Naive thymus-derived CD4-positive, alpha-beta T cell (primary cell): ENCODE measurements at regions of chr17 and their contacts with region 1.

Region 1: GRCh38 chr17:46159686-46160085 is 33.5 kb downstream of the KANSL1 start:
- DNase-seq: no peak
- ATAC-seq: no peak
- H3K4me3 ChIP-seq: no peak overlapping the region
- H3K4me3 Mint-ChIP-seq: peak overlapping the region in 6 of 10 donors; percentile 2 to 55 (median 30)
- H3K27ac ChIP-seq: no peak overlapping the region
- H3K27ac Mint-ChIP-seq: peak overlapping the region in 7 of 9 donors; percentile 5 to 60 (median 29)
- H3K4me1 ChIP-seq: peaks cover 78 to 84% of the 10 kb centered on the region in 2 donors
- H3K4me1 Mint-ChIP-seq: peaks cover 75 to 99% (median 89%) of the 10 kb centered on the region in 7 donors
- H3K27me3 ChIP-seq: no peaks in the 10 kb centered on the region
- H3K27me3 Mint-ChIP-seq: no peaks in the 10 kb centered on the region

Region 2: GRCh38 chr17:46074540-46074939 is 85.1 kb before region 1 on chr17:
- CTCF ChIA-PET with region 1: no interaction called
- POLR2A ChIA-PET with region 1: no interaction called
- intact Hi-C with region 1: no loop called
- DNase-seq: no peak
- ATAC-seq: no peak
- H3K4me3 ChIP-seq: no peak overlapping the region
- H3K4me3 Mint-ChIP-seq: no peak overlapping the region
- H3K27ac ChIP-seq: no peak overlapping the region
- H3K27ac Mint-ChIP-seq: peak overlapping the region in 3 of 9 donors; percentile 0 to 41 (median 32)
- H3K4me1 ChIP-seq: peaks cover 0 to 4% of the 10 kb centered on the region in 2 donors
- H3K4me1 Mint-ChIP-seq: peaks cover 19 to 78% (median 66%) of the 10 kb centered on the region in 7 donors
- H3K27me3 ChIP-seq: no peaks in the 10 kb centered on the region
- H3K27me3 Mint-ChIP-seq: no peaks in the 10 kb centered on the region

Region 3: DNA sequence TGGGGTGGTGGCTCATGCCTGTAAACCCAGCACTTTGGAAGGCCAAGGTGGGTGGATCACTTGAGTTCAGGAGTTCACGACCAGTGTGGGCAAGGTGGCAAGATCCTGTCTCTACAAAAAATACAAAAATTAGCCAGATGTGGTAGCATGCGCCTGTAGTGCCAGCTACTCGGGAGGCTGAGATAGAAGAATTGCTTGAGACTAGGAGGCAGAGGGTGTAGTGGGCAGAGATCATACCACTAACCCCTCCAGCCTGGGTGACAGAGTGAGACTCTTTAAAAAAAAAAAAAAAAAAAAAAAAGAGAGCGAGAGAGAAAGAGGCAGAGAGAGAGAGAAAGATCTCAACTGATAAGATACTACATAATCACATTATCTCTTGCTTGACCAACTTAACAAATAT is 12.4 kb before region 1 on chr17:
- CTCF ChIA-PET with region 1: interaction called, 5 read pairs
- POLR2A ChIA-PET with region 1: interaction called, 7 read pairs
- intact Hi-C with region 1: loop called in 1 of 2 experiments (anchors 1 kb)
- DNase-seq: peak in 1 of 9 donors; percentile 21
- ATAC-seq: peak; percentile 54
- H3K4me3 ChIP-seq: no peak overlapping the region
- H3K4me3 Mint-ChIP-seq: peak overlapping the region in 9 of 10 donors; percentile 12 to 68 (median 56)
- H3K27ac ChIP-seq: no peak overlapping the region
- H3K27ac Mint-ChIP-seq: peak overlapping the region in 8 of 9 donors; percentile 11 to 88 (median 68)
- H3K4me1 ChIP-seq: peaks cover 73 to 86% of the 10 kb centered on the region in 2 donors
- H3K4me1 Mint-ChIP-seq: peaks cover 71 to 98% (median 91%) of the 10 kb centered on the region in 7 donors
- H3K27me3 ChIP-seq: no peaks in the 10 kb centered on the region
- H3K27me3 Mint-ChIP-seq: no peaks in the 10 kb centered on the region

Region 4: DNA sequence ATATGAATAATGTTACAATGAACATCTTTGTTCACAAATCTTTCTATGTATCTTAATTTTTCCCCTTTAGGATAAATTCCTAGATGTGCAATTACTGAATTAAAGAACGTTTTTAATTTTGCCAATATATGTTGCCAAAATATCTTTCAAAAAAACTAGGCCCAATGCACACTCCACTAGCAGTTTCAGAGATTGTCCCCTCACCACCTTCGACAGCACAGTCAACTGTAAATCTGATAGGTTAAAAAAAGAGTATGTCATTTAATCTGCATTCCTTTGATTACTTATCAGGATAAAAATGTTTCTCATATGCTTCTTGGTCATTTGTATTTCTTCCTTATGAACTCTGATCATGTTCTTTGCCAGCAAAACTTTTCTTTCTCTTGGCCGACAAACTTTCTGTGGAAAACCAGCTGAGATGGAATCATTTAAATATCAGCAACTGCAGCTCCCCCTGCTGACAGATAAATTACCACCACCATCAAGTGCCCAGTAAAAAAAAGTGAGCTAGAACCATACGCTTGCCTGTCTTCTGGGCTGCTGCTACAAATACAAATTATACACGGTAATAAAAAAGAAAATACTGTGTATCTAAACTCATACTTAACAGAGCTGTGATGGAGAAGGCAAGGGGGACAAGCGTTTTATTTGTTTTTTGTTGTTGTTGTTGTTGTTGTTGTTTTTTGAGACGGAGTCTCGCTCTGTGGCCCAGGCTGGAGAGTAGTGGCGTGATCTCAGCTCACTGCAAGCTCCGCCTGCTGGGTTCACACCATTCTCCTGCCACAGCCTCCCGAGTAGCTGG is 53.1 kb after region 1 on chr17:
- CTCF ChIA-PET with region 1: no interaction called
- POLR2A ChIA-PET with region 1: no interaction called
- intact Hi-C with region 1: no loop called
- DNase-seq: peak in 7 of 9 donors; percentile 64 to 83 (median 77)
- ATAC-seq: peak; percentile 92
- H3K4me3 ChIP-seq: no peak overlapping the region
- H3K4me3 Mint-ChIP-seq: peak overlapping the region in 6 of 10 donors; percentile 7 to 35 (median 18)
- H3K27ac ChIP-seq: no peak overlapping the region
- H3K27ac Mint-ChIP-seq: peak overlapping the region in 8 of 9 donors; percentile 46 to 89 (median 80)
- H3K4me1 ChIP-seq: peaks cover 0 to 3% of the 10 kb centered on the region in 2 donors
- H3K4me1 Mint-ChIP-seq: peaks cover 24 to 69% (median 50%) of the 10 kb centered on the region in 7 donors
- H3K27me3 ChIP-seq: no peaks in the 10 kb centered on the region
- H3K27me3 Mint-ChIP-seq: no peaks in the 10 kb centered on the region

Region 5: DNA sequence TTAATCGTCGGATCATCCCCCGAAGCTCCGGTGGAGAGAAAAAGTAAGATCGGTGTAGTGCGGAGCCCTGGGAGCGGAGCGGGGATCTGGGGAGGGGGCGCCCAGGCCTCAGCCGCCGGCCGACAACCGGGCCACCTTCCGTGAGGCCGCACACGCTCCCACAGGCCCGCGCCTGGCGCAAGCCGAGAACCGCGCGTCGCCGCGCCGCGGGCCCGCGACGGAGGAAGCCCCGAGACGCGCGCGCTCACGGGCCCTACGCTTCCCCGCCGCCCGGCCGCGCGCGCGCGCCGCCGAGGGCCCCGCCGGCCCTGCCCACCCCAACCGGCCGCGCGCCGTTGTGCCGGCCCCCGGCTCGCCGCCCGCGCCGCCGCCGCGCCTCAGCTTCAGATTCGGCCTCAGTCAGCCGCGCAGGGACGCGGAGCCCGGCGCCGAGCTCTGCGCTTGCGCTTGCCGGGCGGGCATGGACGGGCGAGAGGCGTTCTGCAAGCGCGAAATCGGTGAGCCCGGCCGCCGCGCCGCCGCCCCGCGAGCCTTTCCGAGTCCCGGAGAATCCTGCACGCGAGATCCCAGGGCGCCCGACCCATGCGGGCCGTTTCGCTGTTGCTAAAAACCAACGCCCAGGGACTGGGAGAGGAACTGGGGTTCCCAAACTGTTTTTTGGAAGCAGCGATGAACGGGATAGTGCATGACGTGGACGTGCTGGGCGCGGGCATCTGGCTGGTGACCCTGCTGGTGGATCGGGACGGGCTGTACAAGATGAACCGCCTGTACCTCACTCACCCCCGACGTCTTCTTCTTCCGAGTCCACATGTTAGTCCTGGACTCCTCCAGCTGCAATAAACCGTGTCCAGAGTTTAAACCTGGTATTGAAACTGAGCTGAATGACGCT is 107.2 kb after region 1 on chr17:
- CTCF ChIA-PET with region 1: no interaction called
- POLR2A ChIA-PET with region 1: no interaction called
- intact Hi-C with region 1: no loop called
- DNase-seq: peak; percentile 44 to 94 (median 81)
- ATAC-seq: peak; percentile 87
- H3K4me3 ChIP-seq: peak overlapping the region; percentile 79
- H3K4me3 Mint-ChIP-seq: peak overlapping the region; percentile 89 to 96 (median 93)
- H3K27ac ChIP-seq: peak overlapping the region; percentile 79
- H3K27ac Mint-ChIP-seq: peak overlapping the region; percentile 76 to 95 (median 85)
- H3K4me1 ChIP-seq: peaks cover 25% of the 10 kb centered on the region in 2 donors
- H3K4me1 Mint-ChIP-seq: peaks cover 18 to 38% (median 34%) of the 10 kb centered on the region in 7 donors
- H3K27me3 ChIP-seq: no peaks in the 10 kb centered on the region
- H3K27me3 Mint-ChIP-seq: peaks cover 0 to 52% (median 0%) of the 10 kb centered on the region in 5 donors

Region 6: DNA sequence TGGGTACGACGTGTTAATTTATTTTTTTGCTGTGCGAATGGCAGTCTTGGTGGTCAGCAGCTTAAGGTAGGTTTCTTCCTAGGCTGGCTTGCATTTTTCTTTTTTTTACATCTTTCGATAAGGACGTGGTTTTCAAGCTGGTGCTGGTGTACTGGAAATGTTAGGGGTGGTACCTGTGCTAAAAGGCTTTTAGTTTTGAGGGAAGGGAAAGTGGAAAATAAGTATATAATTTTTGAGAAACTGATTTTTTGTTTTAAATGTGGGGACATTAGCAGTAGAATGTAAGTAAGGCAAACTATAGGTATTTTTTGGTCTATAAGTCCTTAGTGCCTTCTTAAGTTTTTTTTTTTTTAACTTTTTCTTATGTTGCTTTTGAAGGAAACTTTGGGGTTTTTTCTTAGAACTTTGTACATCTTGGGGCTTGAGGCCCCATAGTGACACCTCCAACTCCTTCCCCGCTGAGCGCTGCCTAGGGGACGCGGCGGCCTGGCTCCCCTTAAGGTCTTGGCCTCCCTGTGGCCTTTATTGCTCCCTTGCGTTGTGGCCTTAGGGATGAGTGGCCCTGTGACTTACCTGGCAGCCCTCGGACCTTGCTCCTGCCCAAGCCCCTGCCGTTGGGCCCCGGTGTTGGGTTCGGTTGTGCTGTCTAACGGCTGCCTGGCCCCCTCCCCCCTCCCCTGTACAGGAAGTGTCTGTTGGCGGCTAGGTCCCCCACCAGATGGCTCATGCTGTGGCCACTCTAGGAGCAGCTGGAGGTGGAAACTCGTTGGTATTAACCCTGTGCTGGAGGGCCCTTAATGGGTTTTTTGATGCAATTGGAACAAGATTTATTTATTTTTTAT is 907.4 kb after region 1 on chr17:
- CTCF ChIA-PET with region 1: no interaction called
- POLR2A ChIA-PET with region 1: no interaction called
- intact Hi-C with region 1: no loop called
- DNase-seq: peak; percentile 42 to 87 (median 83)
- ATAC-seq: peak; percentile 100
- H3K4me3 ChIP-seq: peak overlapping the region; percentile 95
- H3K4me3 Mint-ChIP-seq: peak overlapping the region; percentile 81 to 97 (median 95)
- H3K27ac ChIP-seq: peak overlapping the region; percentile 89
- H3K27ac Mint-ChIP-seq: peak overlapping the region; percentile 70 to 97 (median 95)
- H3K4me1 ChIP-seq: peaks cover 0 to 10% of the 10 kb centered on the region in 2 donors
- H3K4me1 Mint-ChIP-seq: peaks cover 17 to 48% (median 39%) of the 10 kb centered on the region in 7 donors
- H3K27me3 ChIP-seq: no peaks in the 10 kb centered on the region
- H3K27me3 Mint-ChIP-seq: no peaks in the 10 kb centered on the region